ENCODE measurements at regions of chr1 and their contacts with region 1.

Region 1: DNA sequence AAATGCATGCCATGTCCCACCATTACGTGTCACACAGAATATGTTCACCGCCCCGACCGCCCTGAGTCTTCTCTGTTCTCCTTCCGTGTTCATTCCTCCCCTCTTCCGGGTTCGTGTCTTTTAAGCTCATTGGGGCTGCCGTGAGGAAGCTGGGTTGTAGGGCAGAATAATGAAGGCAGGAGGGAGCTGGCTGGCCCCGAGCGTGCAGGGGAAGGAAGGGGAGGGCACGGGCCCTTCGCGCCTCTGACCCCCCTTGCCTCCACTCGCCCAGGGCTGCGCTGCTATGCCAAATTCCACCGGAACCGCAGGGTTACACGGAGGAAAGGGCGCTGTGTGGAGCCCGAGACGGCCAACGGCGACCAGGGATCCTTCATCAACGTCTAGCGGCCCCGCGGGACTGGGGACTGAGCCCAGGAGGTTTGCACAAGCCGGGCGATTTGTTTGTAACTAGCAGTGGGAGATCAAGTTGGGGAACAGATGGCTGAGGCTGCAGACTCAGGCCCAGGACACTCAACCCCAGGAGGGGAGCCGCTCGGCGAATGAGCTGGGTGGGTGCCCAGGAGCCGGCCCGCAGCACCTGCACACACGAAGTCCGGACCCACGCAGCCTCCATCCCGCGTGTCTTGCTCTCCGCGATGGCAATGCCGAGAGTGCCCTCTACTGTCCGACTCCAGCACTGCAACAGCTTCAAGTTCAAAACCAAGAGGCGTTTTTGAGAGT is 16.5 kb upstream of the AGTRAP start:
- DNase-seq: no peak
- ATAC-seq: peak; percentile 78
- H3K4me3 ChIP-seq: no peak overlapping the region
- H3K27ac ChIP-seq: no peak overlapping the region
- H3K4me1 ChIP-seq: peaks cover 0 to 16% of the 10 kb centered on the region in 2 experiments; a peak in 2 of 4 replicates
- H3K27me3 ChIP-seq: no peaks in the 10 kb centered on the region
- CTCF ChIP-seq: peak; percentile 91 to 98 (median 97)
- POLR2A ChIP-seq: no peak
- RAD21 ChIP-seq: peak; percentile 99

Region 2: DNA sequence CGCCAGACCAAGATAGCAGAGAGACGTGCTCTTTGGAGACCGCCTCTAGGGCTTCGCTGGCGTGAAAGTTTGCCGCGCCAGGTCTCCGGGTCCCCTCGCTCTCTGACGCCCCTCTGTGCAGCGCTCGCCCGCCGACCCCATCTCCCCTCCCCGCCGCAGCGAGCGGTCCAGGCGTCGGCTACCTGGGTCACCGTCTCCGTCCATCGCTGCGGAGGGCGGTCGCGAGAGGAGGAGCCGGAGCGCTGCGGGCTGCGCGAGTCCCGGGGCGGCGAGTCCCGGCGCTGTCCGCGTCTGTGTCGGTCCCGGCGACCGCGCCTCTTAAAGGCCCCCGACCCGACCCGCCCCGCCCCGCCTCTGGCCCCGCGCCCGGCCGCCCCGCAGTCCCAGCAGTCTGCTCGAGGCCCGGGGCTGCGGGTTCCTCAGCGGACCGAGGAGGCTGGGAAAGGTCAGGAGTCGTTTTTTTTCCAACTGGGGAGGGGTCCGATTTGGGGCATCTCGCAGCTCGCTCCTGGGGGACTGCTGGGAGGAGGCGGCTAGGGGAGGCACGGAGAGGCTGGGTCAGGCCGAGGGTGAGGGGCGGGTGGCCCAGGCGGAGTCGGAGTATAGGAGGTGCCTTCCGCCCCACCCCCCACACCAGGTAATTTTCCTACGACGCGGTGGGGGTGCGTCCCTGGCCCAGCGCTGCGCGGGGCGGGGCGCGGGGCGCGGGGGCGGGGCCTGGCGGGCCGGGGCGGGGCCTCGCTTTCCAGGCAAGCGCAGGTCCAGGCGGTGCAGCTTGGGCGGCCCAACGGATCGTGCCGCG is 65.1 kb before region 1 on chr1 and contains the starts of genes FBXO2 and FBXO44:
- CTCF ChIA-PET with region 1: interaction called, 15 read pairs
- POLR2A ChIA-PET with region 1: no interaction called
- RAD21 ChIA-PET with region 1: interaction called, 6 to 7 read pairs
- intact Hi-C with region 1: loop called (anchors 2 kb)
- DNase-seq: peak; percentile 26
- ATAC-seq: peak; percentile 75
- H3K4me3 ChIP-seq: peak within 1 kb of the TSS; percentile 63 to 80
- H3K27ac ChIP-seq: peak within 1 kb of the TSS; percentile 87
- H3K4me1 ChIP-seq: peaks cover 28 to 53% of the 10 kb centered on the region in 2 experiments; a peak in 3 of 4 replicates
- H3K27me3 ChIP-seq: no peaks in the 10 kb centered on the region
- CTCF ChIP-seq: no peak
- POLR2A ChIP-seq: no peak
- RAD21 ChIP-seq: no peak
- total RNA-seq, gene FBXO2: 81.1 TPM
- total RNA-seq, gene FBXO44: 60.9 TPM

Region 3: GRCh38 chr1:11661103-11661502 is 58.4 kb before region 1 on chr1:
- CTCF ChIA-PET with region 1: interaction called, 17 read pairs
- POLR2A ChIA-PET with region 1: interaction called, 6 read pairs
- RAD21 ChIA-PET with region 1: interaction called in 1 of 2 experiments, 10 read pairs
- intact Hi-C with region 1: no loop called
- DNase-seq: no peak
- ATAC-seq: no peak
- H3K4me3 ChIP-seq: no peak overlapping the region
- H3K27ac ChIP-seq: 0 out of 2 replicates have a peak overlapping the region, but pooled peaks have one; percentile 22
- H3K4me1 ChIP-seq: peaks cover 9 to 26% of the 10 kb centered on the region in 2 experiments
- H3K27me3 ChIP-seq: no peaks in the 10 kb centered on the region
- CTCF ChIP-seq: no peak
- POLR2A ChIP-seq: no peak
- RAD21 ChIP-seq: no peak

Region 4: GRCh38 chr1:11670747-11671146 is 48.7 kb before region 1 on chr1:
- CTCF ChIA-PET with region 1: interaction called, 17 read pairs
- POLR2A ChIA-PET with region 1: no interaction called
- RAD21 ChIA-PET with region 1: no interaction called
- intact Hi-C with region 1: no loop called
- DNase-seq: no peak
- ATAC-seq: no peak
- H3K4me3 ChIP-seq: no peak overlapping the region
- H3K27ac ChIP-seq: no peak overlapping the region
- H3K4me1 ChIP-seq: no peaks in the 10 kb centered on the region
- H3K27me3 ChIP-seq: no peaks in the 10 kb centered on the region
- CTCF ChIP-seq: no peak
- POLR2A ChIP-seq: no peak
- RAD21 ChIP-seq: no peak